CD8-positive, alpha-beta T cell (primary cell): ENCODE measurements at regions of chr19 and their contacts with region 1.

Region 1: DNA sequence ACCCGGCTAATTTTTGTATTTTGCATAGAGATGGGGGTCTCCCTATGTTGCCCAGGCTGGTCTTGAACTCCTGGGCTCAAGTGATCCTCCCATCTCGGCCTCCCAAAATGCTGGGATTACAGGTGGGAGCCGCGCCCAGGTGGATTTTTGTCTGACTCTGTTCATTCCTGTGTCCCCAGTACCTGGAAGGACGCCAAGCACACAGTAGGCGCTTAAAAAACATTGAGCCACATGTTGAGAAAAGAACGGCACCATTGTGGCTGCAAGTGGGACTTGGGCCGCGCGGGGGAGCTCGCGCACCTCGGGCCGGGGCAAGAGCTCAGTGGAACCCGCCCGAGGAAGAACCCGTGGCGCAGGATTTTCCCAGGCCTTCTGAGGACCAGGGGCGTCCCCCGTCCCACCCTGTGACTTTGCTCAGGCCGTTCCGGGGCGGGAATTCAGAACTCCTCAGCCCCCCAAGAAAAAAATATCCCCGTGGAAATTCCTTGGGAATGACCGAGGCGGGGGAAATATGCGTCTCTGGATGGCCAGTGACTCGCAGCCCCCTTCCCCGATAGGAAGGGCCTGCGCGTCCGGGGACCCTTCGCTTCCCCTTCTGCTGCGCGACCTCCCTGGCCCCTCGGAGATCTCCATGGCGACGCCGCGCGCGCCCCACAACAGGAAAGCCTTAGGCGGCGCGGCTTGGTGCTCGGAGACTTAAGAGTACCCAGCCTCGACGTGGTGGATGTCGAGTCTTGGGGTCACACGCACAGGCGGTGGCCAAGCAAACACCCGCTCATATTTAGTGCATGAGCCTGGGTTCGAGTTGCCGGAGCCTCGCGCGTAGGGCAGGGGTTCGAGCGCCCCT is 1.4 kb upstream of the ICAM1 start:
- DNase-seq: peak; percentile 81 to 93 (median 88)
- ATAC-seq: peak; percentile 66
- H3K4me3 ChIP-seq: peak overlapping the region; percentile 64 to 81
- H3K4me3 Mint-ChIP-seq: peak overlapping the region; percentile 83
- H3K27ac ChIP-seq: peak overlapping the region; percentile 75 to 96
- H3K27ac Mint-ChIP-seq: peak overlapping the region; percentile 84
- H3K4me1 ChIP-seq: peaks cover 26% of the 10 kb centered on the region
- H3K4me1 Mint-ChIP-seq: peaks cover 30% of the 10 kb centered on the region
- H3K27me3 ChIP-seq: no peaks in the 10 kb centered on the region
- H3K27me3 Mint-ChIP-seq: no peaks in the 10 kb centered on the region
- CTCF ChIP-seq: peak; percentile 92

Region 2: DNA sequence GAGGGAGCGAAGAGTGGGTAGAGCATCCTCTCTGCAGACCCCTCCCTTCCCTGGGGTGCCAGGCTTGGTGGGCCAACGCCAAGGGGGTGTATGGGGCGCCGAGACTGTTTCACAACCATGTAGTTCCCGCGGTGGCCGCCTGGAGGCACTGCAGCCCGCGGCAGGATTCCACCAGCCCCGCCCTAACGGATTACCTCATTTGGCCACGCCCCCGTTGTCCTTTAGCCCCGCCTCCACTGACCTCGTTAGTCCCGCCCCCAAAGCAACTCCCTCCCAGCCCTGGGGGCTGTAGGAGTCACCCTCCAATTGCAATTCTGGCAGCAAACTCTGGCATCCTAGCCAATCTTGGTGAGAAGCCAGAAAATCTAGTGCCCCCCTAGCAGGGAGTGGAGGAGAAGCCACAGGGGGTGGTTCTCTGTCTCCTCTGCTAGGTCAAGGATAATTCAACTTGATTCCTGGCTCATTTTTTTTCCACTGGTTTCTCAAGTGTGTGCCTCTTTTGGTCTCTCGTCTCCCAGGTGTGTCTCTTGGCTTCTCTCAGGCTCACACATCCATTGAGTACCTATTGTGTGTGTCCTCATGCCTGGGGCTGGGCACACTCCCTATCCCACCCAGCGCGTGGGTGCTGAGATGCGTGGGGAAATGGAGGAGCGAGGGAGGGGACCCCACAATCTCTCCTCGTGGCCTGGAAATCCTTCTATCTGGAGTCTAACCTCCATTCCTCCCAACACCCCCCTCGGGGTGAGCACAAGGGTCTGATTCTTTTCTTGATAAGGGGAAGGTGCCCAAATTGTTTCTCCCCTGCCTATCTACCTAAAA is 335.2 kb before region 1 on chr19:
- CTCF ChIA-PET with region 1: interaction called, 3 read pairs
- POLR2A ChIA-PET with region 1: no interaction called
- intact Hi-C with region 1: loop called in 1 of 2 experiments (anchors 5 kb)
- DNase-seq: peak; percentile 63 to 90 (median 80)
- ATAC-seq: peak; percentile 92
- H3K4me3 ChIP-seq: no peak overlapping the region
- H3K4me3 Mint-ChIP-seq: no peak overlapping the region
- H3K27ac ChIP-seq: no peak overlapping the region
- H3K27ac Mint-ChIP-seq: no peak overlapping the region
- H3K4me1 ChIP-seq: peaks cover 21% of the 10 kb centered on the region
- H3K4me1 Mint-ChIP-seq: peaks cover 30% of the 10 kb centered on the region
- H3K27me3 ChIP-seq: peaks cover 6 to 38% of the 10 kb centered on the region in 2 experiments
- H3K27me3 Mint-ChIP-seq: peaks cover 51% of the 10 kb centered on the region
- CTCF ChIP-seq: peak; percentile 89

Region 3: DNA sequence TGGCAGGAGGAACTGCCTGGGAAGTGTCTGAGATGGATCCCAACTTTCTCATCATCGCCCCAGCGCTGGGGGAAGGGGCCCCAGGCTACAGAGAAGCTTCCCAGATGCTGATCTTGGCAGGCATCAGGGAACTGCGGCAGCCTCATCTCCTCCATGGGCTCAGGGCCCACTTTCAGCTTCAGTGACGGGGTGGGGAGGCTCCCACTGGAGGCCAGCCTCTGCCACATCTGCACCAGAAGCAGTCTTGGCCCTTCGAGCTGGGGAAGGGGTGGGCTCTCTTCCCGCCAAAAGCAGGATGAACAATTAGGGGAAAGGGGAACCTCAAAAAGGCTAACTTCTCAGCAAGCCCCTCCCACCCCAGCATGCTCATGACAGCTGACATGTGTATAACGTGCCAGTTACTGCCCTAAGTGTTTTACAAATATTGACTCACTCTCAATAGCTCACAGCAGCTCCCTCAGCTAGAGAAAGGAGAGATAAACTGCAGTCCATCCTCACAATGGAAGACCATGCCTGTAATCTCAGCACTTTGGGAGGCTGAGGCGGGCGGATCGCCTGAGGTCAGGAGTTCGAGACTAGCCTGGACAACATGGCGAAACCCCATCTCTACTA is 31.3 kb before region 1 on chr19:
- CTCF ChIA-PET with region 1: no interaction called
- POLR2A ChIA-PET with region 1: no interaction called
- intact Hi-C with region 1: no loop called
- DNase-seq: no peak
- ATAC-seq: no peak
- H3K4me3 ChIP-seq: no peak overlapping the region
- H3K4me3 Mint-ChIP-seq: no peak overlapping the region
- H3K27ac ChIP-seq: no peak overlapping the region
- H3K27ac Mint-ChIP-seq: peak overlapping the region; percentile 60
- H3K4me1 ChIP-seq: peaks cover 18% of the 10 kb centered on the region
- H3K4me1 Mint-ChIP-seq: peaks cover 21% of the 10 kb centered on the region
- H3K27me3 ChIP-seq: no peaks in the 10 kb centered on the region
- H3K27me3 Mint-ChIP-seq: no peaks in the 10 kb centered on the region
- CTCF ChIP-seq: no peak

Region 4: DNA sequence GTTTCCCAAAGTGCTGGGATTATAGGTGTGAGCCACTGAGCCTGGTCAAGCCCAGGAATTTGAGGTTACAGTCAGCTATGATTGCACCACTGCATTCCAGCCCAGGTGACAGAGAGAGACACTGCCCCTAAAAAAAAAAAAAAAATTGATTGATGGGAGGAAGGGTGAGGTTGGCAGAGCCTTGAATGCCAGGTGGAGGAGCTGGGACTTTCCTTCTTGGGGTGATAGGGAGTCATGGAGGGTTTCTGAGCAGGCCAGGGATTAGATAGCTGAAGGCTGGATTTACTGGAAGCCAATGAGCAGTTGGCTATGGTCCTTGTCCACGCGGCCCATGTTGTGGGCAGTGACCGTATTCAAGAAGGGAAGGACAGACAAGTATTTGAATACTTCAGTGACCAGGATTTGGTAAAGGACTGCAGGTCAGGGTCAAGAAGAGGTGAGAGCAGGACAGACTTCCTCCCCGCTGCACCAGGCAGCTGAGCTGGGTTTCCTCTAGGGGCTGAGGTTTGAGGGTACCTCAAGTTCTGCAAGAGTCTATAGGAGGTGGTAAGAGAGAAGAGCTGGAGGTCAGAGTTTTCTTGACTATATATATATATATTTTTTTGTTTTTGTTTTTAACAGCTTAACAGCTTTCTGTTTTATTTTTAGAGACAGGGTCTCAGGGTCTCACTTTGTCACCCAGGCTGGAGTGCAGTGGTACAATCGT is 10.3 kb after region 1 on chr19:
- CTCF ChIA-PET with region 1: interaction called, 24 read pairs
- POLR2A ChIA-PET with region 1: interaction called, 8 read pairs
- intact Hi-C with region 1: no loop called
- DNase-seq: peak in 1 of 9 experiments; percentile 44
- ATAC-seq: peak; percentile 38
- H3K4me3 ChIP-seq: no peak overlapping the region
- H3K4me3 Mint-ChIP-seq: peak overlapping the region; percentile 8
- H3K27ac ChIP-seq: peak overlapping the region in 1 of 2 experiments; percentile 54
- H3K27ac Mint-ChIP-seq: peak overlapping the region; percentile 52
- H3K4me1 ChIP-seq: no peaks in the 10 kb centered on the region
- H3K4me1 Mint-ChIP-seq: peaks cover 15% of the 10 kb centered on the region
- H3K27me3 ChIP-seq: no peaks in the 10 kb centered on the region
- H3K27me3 Mint-ChIP-seq: no peaks in the 10 kb centered on the region
- CTCF ChIP-seq: no peak

Region 5: DNA sequence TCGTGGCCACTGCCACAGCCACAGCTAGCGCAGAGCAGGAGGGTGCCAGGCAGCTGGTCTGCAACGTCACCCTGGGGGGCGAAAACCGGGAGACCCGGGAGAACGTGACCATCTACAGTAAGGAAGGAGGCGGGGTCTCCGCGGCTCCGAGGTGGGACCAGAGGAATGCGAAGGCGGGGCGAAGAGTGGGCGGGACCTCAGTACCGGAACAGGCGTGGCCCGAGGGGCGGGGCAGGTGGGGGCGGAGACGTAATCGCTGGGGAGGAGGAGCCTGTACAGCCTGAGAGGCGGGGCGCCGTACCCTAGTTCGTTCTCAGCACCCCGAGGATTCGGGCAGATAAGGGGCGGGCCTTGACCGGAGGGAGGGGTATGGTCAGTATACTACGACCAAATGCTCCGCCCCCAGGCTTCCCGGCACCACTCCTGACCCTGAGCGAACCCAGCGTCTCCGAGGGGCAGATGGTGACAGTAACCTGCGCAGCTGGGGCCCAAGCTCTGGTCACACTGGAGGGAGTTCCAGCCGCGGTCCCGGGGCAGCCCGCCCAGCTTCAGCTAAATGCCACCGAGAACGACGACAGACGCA is 22.7 kb after region 1 on chr19:
- CTCF ChIA-PET with region 1: interaction called, 24 read pairs
- POLR2A ChIA-PET with region 1: interaction called, 15 read pairs
- intact Hi-C with region 1: loop called in 1 of 2 experiments (anchors 1 kb)
- DNase-seq: peak; percentile 41 to 79 (median 69)
- ATAC-seq: peak; percentile 45
- H3K4me3 ChIP-seq: peak overlapping the region; percentile 47 to 51
- H3K4me3 Mint-ChIP-seq: peak overlapping the region; percentile 80
- H3K27ac ChIP-seq: no peak overlapping the region
- H3K27ac Mint-ChIP-seq: no peak overlapping the region
- H3K4me1 ChIP-seq: peaks cover 79% of the 10 kb centered on the region
- H3K4me1 Mint-ChIP-seq: peaks cover 70% of the 10 kb centered on the region
- H3K27me3 ChIP-seq: peaks cover 58 to 78% of the 10 kb centered on the region in 2 experiments
- H3K27me3 Mint-ChIP-seq: peaks cover 59% of the 10 kb centered on the region
- CTCF ChIP-seq: no peak

Region 6: DNA sequence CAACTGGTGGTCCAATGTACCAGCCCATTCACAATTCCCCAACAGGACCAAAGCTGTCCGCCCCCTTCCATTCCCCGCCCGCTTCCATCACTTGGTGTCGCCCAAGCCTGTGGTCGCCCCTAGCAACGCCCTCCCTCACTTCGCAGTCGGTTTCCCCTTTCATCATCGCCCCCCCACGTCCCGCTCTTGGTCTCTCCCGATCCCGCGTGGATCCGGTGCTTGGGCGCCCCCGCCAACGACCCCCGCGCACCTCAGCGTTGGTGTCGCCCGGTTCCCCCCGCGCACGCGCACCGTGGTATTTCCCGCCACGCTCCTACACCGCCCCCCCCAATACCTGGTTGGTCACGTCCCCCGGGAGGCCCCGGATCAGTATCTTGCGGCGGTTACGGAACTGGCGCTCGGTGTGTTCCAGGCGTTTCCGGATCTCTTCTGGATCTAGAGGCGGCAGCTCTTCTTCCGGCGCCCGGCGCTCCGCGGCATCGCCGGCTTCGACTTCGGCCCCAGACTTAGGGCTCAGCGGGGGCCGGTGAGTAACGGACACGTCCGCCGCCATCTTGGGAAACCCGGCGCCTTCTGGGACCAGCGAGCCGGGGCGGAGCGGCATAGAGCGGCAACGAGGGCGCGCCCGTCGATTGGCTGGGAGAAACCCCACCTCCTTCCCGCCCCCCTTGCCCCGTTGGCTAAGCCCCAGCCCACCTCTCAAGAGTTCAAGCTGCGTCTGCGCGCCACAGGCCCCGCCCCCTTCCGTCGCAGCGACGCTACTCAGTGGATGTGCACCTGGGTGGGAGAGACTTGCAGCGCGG is 63.6 kb after region 1 on chr19 and contains the start of gene RAVER1:
- CTCF ChIA-PET with region 1: interaction called, 9 read pairs
- POLR2A ChIA-PET with region 1: no interaction called
- intact Hi-C with region 1: loop called (anchors 1 kb)
- DNase-seq: peak; percentile 94 to 99 (median 98)
- ATAC-seq: peak; percentile 96
- H3K4me3 ChIP-seq: peak within 1 kb of the TSS; percentile 93 to 97
- H3K4me3 Mint-ChIP-seq: peak within 1 kb of the TSS; percentile 95
- H3K27ac ChIP-seq: peak within 1 kb of the TSS; percentile 76 to 95
- H3K27ac Mint-ChIP-seq: peak within 1 kb of the TSS; percentile 93
- H3K4me1 ChIP-seq: peaks cover 30% of the 10 kb centered on the region
- H3K4me1 Mint-ChIP-seq: peaks cover 35% of the 10 kb centered on the region
- H3K27me3 ChIP-seq: no peaks in the 10 kb centered on the region
- H3K27me3 Mint-ChIP-seq: no peaks in the 10 kb centered on the region
- CTCF ChIP-seq: no peak
- total RNA-seq, gene RAVER1: 33.3 to 33.6 TPM

Region 7: GRCh38 chr19:10380313-10381102 is 111.0 kb after region 1 on chr19 and contains the start of gene TYK2:
- CTCF ChIA-PET with region 1: interaction called, 671 read pairs
- POLR2A ChIA-PET with region 1: interaction called, 16 read pairs
- intact Hi-C with region 1: loop called (anchors 2 kb)
- DNase-seq: peak; percentile 91 to 99 (median 96)
- ATAC-seq: peak; percentile 98
- H3K4me3 ChIP-seq: peak within 1 kb of the TSS; percentile 73 to 84
- H3K4me3 Mint-ChIP-seq: peak within 1 kb of the TSS; percentile 96
- H3K27ac ChIP-seq: peak within 1 kb of the TSS; percentile 76 to 88
- H3K27ac Mint-ChIP-seq: peak within 1 kb of the TSS; percentile 96
- H3K4me1 ChIP-seq: peaks cover 9% of the 10 kb centered on the region
- H3K4me1 Mint-ChIP-seq: peaks cover 22% of the 10 kb centered on the region
- H3K27me3 ChIP-seq: no peaks in the 10 kb centered on the region
- H3K27me3 Mint-ChIP-seq: no peaks in the 10 kb centered on the region
- CTCF ChIP-seq: no peak
- total RNA-seq, gene TYK2: 244 to 250 TPM

Region 8: DNA sequence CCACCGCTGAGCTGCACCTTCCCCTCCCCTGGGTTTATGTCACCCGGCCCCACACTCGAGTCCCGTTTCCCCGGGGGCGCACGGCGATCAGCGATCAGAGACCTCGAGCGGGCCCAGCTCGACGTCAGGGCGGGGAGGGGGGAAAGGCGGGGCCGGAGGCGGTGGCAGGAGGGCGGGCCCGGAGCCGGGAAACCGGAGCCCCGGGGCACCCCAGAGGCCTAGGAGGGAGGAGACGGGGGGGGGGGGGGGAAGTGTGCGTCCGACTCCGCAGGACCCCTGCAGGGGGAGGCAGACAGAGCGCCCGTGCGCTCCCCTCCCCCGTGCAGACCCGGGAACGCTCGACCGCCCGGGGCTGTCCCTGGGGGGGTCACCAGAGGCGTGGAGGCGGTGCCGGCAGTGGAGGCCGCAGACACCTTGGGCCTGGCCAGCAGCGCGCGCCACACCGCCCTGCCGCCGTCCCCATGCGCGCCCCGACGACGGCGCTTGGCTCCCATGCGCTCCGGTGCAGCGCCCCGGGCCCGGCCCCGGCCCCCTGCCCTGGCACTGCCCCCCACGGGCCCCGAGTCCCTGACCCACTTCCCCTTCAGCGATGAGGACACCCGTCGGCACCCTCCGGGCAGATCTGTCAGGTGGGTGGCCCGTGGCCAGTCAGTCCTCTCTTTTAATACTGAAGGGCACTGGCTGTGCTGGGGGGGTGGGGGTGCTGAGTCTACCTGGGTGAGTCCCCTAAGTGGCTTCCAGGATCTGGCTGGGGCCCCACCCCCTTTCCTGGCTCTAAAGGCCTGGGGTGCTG is 162.6 kb after region 1 on chr19:
- CTCF ChIA-PET with region 1: no interaction called
- POLR2A ChIA-PET with region 1: no interaction called
- intact Hi-C with region 1: loop called in 1 of 2 experiments (anchors 1 kb)
- DNase-seq: peak in 8 of 9 experiments; percentile 60 to 90 (median 78)
- ATAC-seq: peak; percentile 35
- H3K4me3 ChIP-seq: peak overlapping the region; percentile 44 to 52
- H3K4me3 Mint-ChIP-seq: peak overlapping the region; percentile 87
- H3K27ac ChIP-seq: peak overlapping the region; percentile 43 to 77
- H3K27ac Mint-ChIP-seq: peak overlapping the region; percentile 92
- H3K4me1 ChIP-seq: peaks cover 37% of the 10 kb centered on the region
- H3K4me1 Mint-ChIP-seq: peaks cover 50% of the 10 kb centered on the region
- H3K27me3 ChIP-seq: peaks cover 0 to 7% of the 10 kb centered on the region in 2 experiments
- H3K27me3 Mint-ChIP-seq: peaks cover 23% of the 10 kb centered on the region
- CTCF ChIP-seq: no peak

Region 9: DNA sequence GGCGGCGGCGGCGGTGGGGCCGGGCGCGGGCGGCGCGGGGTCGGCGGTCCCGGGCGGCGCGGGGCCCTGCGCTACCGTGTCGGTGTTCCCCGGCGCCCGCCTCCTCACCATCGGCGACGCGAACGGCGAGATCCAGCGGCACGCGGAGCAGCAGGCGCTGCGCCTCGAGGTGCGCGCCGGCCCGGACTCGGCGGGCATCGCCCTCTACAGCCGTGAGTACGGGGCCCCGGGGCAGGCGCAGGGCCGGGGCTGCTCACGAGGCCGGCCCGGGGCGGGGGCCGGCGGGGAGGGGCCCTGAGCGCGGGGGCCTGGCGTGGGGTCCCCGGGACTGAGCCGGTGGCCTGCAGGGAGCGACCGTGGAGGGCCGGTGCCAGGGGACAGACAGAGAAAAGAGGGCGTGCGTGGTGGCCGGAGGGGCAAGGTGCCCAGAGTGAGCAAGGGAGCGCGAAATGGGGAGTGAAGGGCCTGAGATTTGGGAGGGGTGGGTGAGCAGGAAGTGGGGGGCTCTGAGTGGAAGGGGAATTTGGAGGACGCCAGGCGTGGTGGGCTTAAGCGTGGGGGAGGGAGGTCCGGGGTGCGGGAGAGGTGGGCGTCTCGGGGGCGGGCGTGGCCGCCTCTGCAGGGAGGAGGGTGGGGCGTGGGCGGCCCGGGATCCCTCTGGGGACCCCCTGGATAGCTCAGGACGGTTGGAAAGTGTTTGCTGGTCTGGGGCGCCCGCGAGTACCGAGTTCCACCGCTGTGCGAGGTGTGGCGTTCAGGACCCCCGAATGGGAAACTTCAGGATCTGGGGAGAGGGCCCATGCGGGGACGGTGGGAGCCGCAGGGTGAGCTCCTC is 602.4 kb after region 1 on chr19:
- CTCF ChIA-PET with region 1: no interaction called
- POLR2A ChIA-PET with region 1: no interaction called
- intact Hi-C with region 1: no loop called
- DNase-seq: peak in 6 of 9 experiments; percentile 19 to 71 (median 45)
- ATAC-seq: no peak
- H3K4me3 ChIP-seq: peak overlapping the region; percentile 59 to 62
- H3K4me3 Mint-ChIP-seq: peak overlapping the region; percentile 89
- H3K27ac ChIP-seq: peak overlapping the region in 1 of 2 experiments; percentile 37
- H3K27ac Mint-ChIP-seq: peak overlapping the region; percentile 84
- H3K4me1 ChIP-seq: peaks cover 17% of the 10 kb centered on the region
- H3K4me1 Mint-ChIP-seq: peaks cover 24% of the 10 kb centered on the region
- H3K27me3 ChIP-seq: no peaks in the 10 kb centered on the region
- H3K27me3 Mint-ChIP-seq: no peaks in the 10 kb centered on the region
- CTCF ChIP-seq: no peak